Heart right ventricle (tissue), 16 donors: ENCODE measurements at regions of chr3 and their contacts with region 1.

Region 1: GRCh38 chr3:81929699-81930098 is 168.3 kb upstream of the GBE1 start:
- DNase-seq: no peak
- ATAC-seq: no peak
- H3K4me3 ChIP-seq: no peak overlapping the region
- H3K27ac ChIP-seq: no peak overlapping the region
- H3K4me1 ChIP-seq: no peaks in the 10 kb centered on the region
- H3K27me3 ChIP-seq: no peaks in the 10 kb centered on the region
- CTCF ChIP-seq: no peak

Region 2: DNA sequence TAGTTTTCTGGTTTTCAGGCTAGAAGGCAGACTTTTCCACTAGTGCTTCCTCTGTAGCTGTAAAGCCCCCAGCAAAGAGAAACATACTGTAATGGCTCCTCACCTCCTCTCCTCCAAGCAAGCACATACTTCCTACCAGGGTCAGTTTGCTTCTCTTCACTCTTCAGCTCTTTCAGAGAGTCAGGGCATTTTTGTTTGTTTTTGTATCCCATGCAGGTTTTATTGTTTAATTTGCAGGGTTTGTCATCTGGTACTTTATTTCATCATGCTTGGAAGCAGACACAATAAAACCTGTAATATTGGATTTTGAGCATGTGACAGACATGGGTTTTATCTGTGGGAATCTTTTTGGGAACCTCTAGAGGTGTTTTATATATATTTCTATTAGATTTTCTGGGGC is 1408.6 kb before region 1 on chr3:
- intact Hi-C with region 1: no loop called
- DNase-seq: no peak
- ATAC-seq: no peak
- H3K4me3 ChIP-seq: no peak overlapping the region
- H3K27ac ChIP-seq: no peak overlapping the region
- H3K4me1 ChIP-seq: no peaks in the 10 kb centered on the region
- H3K27me3 ChIP-seq: no peaks in the 10 kb centered on the region
- CTCF ChIP-seq: no peak

Region 3: GRCh38 chr3:81198756-81199155 is 730.9 kb before region 1 on chr3:
- intact Hi-C with region 1: loop called in 1 of 10 experiments (anchors 5 kb)
- DNase-seq: no peak
- ATAC-seq: no peak
- H3K4me3 ChIP-seq: no peak overlapping the region
- H3K27ac ChIP-seq: no peak overlapping the region
- H3K4me1 ChIP-seq: no peaks in the 10 kb centered on the region
- H3K27me3 ChIP-seq: no peaks in the 10 kb centered on the region
- CTCF ChIP-seq: no peak

Region 4: GRCh38 chr3:81913886-81914663 is 15.6 kb before region 1 on chr3:
- intact Hi-C with region 1: no loop called
- DNase-seq: no peak
- ATAC-seq: no peak
- H3K4me3 ChIP-seq: no peak overlapping the region
- H3K27ac ChIP-seq: no peak overlapping the region
- H3K4me1 ChIP-seq: peaks cover 0 to 4% (median 0%) of the 10 kb centered on the region in 9 donors
- H3K27me3 ChIP-seq: no peaks in the 10 kb centered on the region
- CTCF ChIP-seq: no peak

Region 5: DNA sequence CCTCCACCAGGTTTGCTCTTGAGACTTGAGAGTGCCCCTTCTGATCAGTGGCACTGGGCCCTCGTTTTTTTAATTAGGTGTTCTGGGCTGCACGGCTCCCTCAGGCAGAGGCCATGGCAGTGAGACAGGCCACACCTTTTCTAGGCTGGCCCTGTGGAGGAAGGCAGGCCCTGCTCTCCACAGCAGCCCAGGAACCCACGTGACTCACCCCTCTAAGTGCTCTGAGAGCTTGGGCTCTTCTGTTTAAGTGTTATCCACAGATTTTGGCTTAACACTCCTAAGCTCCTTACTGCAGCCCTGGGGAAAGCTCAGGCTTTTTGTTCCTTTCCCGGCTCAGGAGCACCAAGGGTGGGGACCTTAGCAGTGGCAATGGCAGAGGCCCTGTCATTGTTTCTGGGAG is 295.0 kb after region 1 on chr3:
- intact Hi-C with region 1: no loop called
- DNase-seq: no peak
- ATAC-seq: peak in 2 of 8 donors; percentile 19 to 44
- H3K4me3 ChIP-seq: no peak overlapping the region
- H3K27ac ChIP-seq: no peak overlapping the region
- H3K4me1 ChIP-seq: no peaks in the 10 kb centered on the region
- H3K27me3 ChIP-seq: no peaks in the 10 kb centered on the region
- CTCF ChIP-seq: no peak